Right ventricle myocardium inferior (tissue), 1 donor: ENCODE measurements at regions of chr7 and their contacts with region 1.

Region 1: DNA sequence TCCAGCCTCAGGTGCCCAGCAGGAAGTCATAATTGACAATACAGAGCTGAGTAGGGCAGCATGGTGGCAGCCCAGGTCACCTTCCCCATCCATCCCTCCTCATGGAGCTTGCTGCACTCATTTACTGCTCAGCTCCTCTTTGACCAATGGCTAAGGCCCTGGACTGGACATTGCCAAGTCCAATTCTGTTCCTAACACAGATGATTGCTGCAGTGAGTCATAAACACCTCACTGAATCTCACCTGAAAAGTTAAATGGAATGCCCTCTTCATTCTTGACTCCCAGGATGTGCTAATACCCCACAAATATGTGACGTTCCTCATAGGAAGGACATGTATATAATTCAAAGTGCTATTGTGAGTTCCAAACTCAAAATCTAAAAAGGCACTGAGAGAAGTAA is 73.5 kb upstream of the DLX6 start:
- DNase-seq: no peak
- ATAC-seq: no peak

Region 2: DNA sequence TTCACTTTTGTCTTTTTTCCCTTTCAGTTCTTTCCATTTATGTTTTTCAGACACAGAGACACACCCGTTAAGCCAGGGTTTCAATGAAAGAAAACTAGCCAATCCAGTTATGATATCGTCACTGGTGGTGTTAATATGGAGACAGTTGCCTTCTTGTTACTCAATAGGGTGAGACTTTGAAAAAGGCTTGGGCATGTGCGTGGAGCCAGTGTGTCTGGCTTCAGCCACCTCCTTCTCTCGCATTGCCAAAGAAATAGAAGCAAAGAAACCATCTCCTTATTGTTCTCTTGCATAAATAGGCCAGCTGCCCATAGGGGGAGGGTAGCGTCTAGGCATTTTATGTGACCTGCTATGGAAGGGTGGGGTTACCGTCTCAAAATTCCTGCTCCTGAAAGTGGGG is 10.6 kb before region 1 on chr7:
- intact Hi-C with region 1: loop called (anchors 1 kb)
- DNase-seq: no peak
- ATAC-seq: no peak

Region 3: GRCh38 chr7:96996105-96996957 is 64.5 kb after region 1 on chr7:
- intact Hi-C with region 1: no loop called
- DNase-seq: no peak
- ATAC-seq: no peak